Aorta (tissue), 5 donors: ENCODE measurements at regions of chr16 and their contacts with region 1.

Region 1: DNA sequence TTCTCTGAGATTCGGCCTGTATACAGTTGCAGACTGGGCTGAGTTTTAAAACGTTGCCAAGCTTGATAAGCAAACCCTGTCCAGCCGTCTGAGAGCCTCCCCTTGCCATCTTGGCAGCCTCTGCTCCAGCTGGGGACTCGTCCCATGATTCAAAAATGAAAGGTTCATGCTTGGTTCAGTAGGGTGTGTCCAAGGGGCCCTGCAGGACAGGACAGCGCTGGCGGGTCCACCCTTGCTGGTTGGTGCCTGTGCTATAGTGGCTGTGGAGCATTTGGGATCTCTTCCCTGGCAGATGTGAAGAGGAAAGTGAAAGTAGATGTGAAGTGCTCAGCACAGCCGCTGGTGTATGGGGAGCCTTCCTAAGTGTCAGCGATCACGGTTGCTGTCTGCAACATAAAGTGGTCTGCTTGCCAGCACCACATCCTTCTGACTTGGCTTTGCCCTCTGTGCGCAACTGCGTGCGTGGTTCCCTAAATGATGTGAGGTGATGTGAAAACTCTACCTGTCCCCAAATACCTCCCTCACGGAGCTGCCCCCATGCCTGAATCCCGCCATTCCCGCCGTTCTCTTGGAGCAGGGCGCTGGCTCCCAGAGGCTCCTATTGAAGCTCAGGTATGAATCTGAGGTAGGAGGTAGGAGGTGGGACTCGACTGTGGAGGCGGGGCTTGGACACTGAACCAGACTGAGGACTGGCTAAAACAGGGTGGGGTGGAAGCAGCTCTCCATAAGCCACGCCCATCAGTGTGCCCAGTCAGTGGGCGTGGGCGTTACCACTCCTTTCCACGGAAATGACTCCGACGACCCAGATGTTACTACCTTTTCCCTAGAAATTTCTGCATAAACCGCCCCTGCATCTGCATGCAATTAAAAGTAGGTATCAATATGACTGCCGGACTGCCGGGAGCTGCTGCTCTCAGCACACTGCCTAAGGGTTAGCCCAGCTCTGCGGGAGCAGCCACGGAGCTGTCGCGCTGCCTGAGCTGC is 40.8 kb downstream of the FOXL1 start:
- DNase-seq: peak; percentile 67 to 81
- ATAC-seq: peak; percentile 65
- H3K4me3 ChIP-seq: peak overlapping the region in 1 of 2 donors; percentile 2
- H3K27ac ChIP-seq: peak overlapping the region in 1 of 2 donors; percentile 4
- H3K4me1 ChIP-seq: peaks cover 1 to 6% of the 10 kb centered on the region in 2 donors
- H3K27me3 ChIP-seq: no peaks in the 10 kb centered on the region

Region 2: GRCh38 chr16:86584726-86585721 is 34.1 kb before region 1 on chr16:
- intact Hi-C with region 1: loop called in 1 of 2 experiments (anchors 5 kb)
- DNase-seq: no peak
- ATAC-seq: peak; percentile 60
- H3K4me3 ChIP-seq: no peak overlapping the region
- H3K27ac ChIP-seq: peak overlapping the region; percentile 92 to 99
- H3K4me1 ChIP-seq: peaks cover 10 to 11% of the 10 kb centered on the region in 2 donors
- H3K27me3 ChIP-seq: no peaks in the 10 kb centered on the region

Region 3: GRCh38 chr16:86975445-86975844 is 356.3 kb after region 1 on chr16:
- intact Hi-C with region 1: no loop called
- DNase-seq: peak; percentile 75 to 82
- ATAC-seq: peak; percentile 63
- H3K4me3 ChIP-seq: no peak overlapping the region
- H3K27ac ChIP-seq: no peak overlapping the region
- H3K4me1 ChIP-seq: no peaks in the 10 kb centered on the region
- H3K27me3 ChIP-seq: no peaks in the 10 kb centered on the region